ENCODE measurements at regions of chrX and their contacts with region 1.

Region 1: DNA sequence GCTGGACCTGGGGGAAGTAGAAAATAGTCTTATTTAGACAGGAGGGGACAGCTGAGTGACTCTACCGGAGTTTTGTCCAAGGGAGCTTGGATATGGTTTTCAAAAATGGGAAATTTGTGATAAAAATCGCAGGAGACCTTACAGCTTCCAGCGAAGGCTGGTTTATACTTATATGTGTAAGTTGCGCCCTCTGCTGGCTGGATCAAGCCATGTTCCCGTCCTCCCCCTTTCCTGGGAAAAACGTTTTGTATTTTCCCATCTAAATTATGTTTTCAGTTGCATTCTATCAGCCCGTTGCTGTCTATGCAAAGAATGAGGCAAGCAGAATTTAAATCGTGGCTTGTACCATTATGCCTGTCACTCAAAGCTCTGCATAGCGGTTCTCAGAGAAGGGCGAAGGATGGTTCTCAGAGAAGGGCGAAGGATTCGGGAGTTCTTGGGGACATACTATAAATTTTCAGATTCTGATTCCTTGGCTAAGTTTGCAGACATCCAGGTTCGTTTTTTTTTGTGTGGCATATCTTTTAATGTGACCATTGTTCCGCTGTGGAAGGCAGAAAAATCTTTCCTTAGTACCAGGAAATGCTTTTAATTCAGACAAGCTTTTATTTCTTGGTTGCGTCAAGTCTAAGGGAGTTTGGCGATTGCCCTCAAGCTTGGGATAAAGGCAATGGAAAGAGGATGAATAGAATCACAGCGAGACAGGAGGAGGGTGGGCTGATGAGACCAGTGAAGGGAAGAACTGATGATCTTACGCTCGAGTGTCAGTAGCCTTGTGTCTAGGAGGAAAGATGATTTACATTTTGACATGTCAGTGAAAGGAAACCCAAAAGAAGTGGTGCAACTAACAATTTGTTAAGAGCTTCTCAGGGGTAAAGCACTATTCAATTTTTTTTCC is 128.5 kb upstream of the ARX start:
- H3K4me3 ChIP-seq: no peak overlapping the region
- H3K27ac ChIP-seq: no peak overlapping the region
- H3K4me1 ChIP-seq: no peaks in the 10 kb centered on the region
- CTCF ChIP-seq: peak; percentile 45; the same call in 1 of the 2 replicates

Region 2: DNA sequence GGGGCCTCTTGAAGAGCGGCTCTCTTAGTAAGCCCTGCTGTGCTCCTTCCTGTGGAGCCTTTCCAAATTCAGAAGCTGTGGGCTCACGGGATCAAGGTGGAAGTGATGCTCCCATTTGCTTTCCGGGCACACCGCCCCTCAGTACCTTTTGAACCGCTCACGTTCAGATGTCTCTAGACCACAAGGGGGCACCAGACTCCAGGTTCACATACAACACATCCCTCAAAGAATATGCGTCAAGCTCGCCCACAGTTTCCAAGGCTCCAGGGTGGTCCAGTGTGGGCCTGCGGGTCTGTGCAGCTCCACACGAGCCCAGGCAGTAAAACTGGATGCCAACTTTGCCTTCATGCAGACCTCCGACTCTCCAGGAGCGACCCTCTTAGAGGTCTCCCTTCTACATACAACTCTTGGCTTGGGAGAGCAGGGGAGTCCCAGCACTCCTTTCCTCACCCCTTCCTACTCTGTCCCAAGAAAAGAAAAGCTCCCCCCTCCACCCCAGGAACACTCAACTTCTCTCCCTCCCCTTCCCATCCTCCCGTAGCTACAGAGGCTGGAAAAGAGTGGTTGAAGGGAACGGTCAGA is 772.8 kb before region 1 on chrX:
- CTCF ChIA-PET with region 1: interaction called, 18 read pairs
- POLR2A ChIA-PET with region 1: no interaction called
- H3K4me3 ChIP-seq: no peak overlapping the region
- H3K27ac ChIP-seq: no peak overlapping the region
- H3K4me1 ChIP-seq: no peaks in the 10 kb centered on the region
- CTCF ChIP-seq: peak; percentile 67

Region 3: DNA sequence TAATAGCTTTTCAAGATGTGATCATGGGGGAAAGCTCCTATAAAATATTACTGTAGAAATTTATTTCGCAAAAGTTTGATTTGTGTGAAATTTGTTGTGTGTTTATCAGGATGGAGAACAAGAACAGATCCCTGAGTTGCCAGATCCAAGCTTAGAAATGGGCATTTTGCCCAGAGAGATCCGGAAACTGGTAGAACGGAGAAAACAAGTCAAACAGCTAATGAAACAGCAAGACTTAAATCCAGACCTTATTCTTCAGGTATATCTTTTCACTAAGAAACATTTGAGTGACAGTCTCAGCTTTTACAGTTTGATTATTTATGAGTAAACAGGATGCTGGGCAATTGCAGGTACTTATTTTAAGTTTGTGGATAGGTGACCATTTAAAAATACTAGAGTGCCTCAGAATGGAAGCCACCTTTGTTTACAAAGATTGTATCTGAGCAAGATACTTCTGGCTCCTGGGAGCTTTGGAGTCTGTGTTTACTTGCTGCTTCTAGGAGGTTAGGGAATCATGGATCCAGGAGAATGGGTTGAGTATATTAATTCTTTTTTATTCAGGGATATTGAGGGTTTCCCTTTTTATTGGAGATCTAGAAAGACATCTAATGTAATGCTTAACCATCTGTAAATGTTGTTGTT is 396.0 kb before region 1 on chrX:
- CTCF ChIA-PET with region 1: interaction called, 21 read pairs
- POLR2A ChIA-PET with region 1: no interaction called
- H3K4me3 ChIP-seq: no peak overlapping the region
- H3K27ac ChIP-seq: no peak overlapping the region
- H3K4me1 ChIP-seq: no peaks in the 10 kb centered on the region
- CTCF ChIP-seq: no peak

Region 4: GRCh38 chrX:25034889-25035288 is 109.4 kb before region 1 on chrX:
- CTCF ChIA-PET with region 1: interaction called, 31 read pairs
- POLR2A ChIA-PET with region 1: no interaction called
- H3K4me3 ChIP-seq: no peak overlapping the region
- H3K27ac ChIP-seq: no peak overlapping the region
- H3K4me1 ChIP-seq: no peaks in the 10 kb centered on the region
- CTCF ChIP-seq: no peak

Region 5: DNA sequence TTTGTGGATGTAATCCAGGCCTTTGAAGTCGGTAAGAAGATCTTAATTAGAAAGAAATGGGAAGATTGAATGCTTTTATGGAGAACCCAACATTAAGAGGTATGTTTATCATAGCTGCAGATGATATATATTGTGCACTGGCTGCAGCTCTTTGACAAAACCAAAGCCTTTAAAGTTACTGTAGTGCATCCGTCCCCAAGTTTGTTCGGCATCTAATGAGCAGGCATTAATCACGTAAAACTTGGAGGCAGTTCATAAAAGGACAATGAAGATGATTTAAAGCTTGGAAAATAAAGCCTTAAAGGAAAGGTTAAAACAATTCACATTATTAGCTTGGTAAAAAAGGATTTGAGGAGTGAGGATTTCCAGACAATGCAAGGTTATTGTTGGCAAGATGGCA is 22.3 kb after region 1 on chrX:
- CTCF ChIA-PET with region 1: interaction called, 12 read pairs
- POLR2A ChIA-PET with region 1: no interaction called
- H3K4me3 ChIP-seq: no peak overlapping the region
- H3K27ac ChIP-seq: no peak overlapping the region
- H3K4me1 ChIP-seq: no peaks in the 10 kb centered on the region
- CTCF ChIP-seq: no peak

Measured in HEK293 (cell line).